CD4-positive, alpha-beta T cell (primary cell): ENCODE measurements at regions of chr17 and their contacts with region 1.

Region 1: GRCh38 chr17:14427900-14428647 is 127.2 kb downstream of the HS3ST3B1 start:
- DNase-seq: peak in 13 of 14 experiments; percentile 15 to 86 (median 47)
- ATAC-seq: peak; percentile 99
- H3K4me3 ChIP-seq: peak overlapping the region; percentile 52
- H3K4me3 Mint-ChIP-seq: peak overlapping the region; percentile 71
- H3K27ac ChIP-seq: peak overlapping the region; percentile 68 to 74
- H3K27ac Mint-ChIP-seq: peak overlapping the region; percentile 93
- H3K4me1 ChIP-seq: peaks cover 47% of the 10 kb centered on the region
- H3K4me1 Mint-ChIP-seq: peaks cover 58% of the 10 kb centered on the region
- H3K27me3 ChIP-seq: no peaks in the 10 kb centered on the region
- H3K27me3 Mint-ChIP-seq: no peaks in the 10 kb centered on the region
- CTCF ChIP-seq: no peak

Region 2: DNA sequence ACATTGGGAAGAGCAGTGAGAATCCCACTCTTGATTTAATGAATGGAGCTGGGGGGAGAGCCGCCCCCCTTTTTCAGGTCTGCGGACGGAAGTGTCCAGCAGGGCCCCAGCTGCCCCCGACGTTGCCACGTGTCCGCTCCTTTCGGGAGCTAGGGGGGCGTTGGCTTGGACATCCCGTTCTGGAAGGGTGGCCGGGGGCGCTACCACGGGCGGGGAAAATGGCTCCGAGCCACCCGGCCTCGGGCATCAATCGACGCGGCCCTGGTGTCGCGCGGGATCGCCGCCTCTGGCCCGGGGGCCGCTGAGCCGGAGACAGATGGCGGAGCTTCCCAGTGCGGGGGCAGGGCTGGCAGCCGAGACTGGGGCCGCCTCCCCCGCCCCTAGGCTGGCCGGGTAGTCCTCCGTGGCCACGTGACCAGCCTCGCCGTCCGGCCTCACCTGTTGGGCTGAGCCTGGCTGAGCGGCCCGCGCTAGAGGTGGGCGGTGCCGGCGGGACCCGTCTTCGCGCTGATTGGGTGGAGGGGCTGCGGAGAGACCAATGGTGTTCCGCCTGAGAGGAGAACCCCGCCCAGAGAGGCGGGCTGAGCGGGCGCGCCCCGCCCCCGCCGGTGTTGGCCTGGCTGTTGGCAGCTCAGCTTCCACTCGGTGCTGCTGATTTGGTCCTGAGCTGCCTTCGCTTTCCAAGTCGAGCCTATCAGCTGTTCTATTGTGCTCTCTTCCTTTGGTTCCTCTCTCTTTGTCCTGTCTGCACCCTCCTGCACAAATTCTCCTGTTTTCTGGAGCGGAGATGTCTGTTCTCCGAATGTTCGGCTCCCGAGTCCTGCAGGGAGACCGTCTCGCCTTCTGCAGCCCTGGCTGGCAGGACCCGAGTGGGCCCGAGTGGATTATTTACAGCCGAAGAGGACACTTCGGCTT is 118.9 kb before region 1 on chr17:
- CTCF ChIA-PET with region 1: no interaction called
- POLR2A ChIA-PET with region 1: interaction called, 93 read pairs
- intact Hi-C with region 1: loop called in 1 of 2 experiments (anchors 5 kb)
- DNase-seq: peak; percentile 84 to 95 (median 90)
- ATAC-seq: peak; percentile 99
- H3K4me3 ChIP-seq: peak overlapping the region; percentile 66
- H3K4me3 Mint-ChIP-seq: peak overlapping the region; percentile 90
- H3K27ac ChIP-seq: no peak overlapping the region
- H3K27ac Mint-ChIP-seq: peak overlapping the region; percentile 36
- H3K4me1 ChIP-seq: peaks cover 35% of the 10 kb centered on the region
- H3K4me1 Mint-ChIP-seq: peaks cover 76% of the 10 kb centered on the region
- H3K27me3 ChIP-seq: no peaks in the 10 kb centered on the region
- H3K27me3 Mint-ChIP-seq: no peaks in the 10 kb centered on the region
- CTCF ChIP-seq: no peak

Region 3: GRCh38 chr17:14405189-14405588 is 22.9 kb before region 1 on chr17:
- CTCF ChIA-PET with region 1: interaction called, 3 read pairs
- POLR2A ChIA-PET with region 1: interaction called, 56 read pairs
- intact Hi-C with region 1: no loop called
- DNase-seq: no peak
- ATAC-seq: no peak
- H3K4me3 ChIP-seq: no peak overlapping the region
- H3K4me3 Mint-ChIP-seq: no peak overlapping the region
- H3K27ac ChIP-seq: no peak overlapping the region
- H3K27ac Mint-ChIP-seq: peak overlapping the region; percentile 36
- H3K4me1 ChIP-seq: peaks cover 7% of the 10 kb centered on the region
- H3K4me1 Mint-ChIP-seq: peaks cover 27% of the 10 kb centered on the region
- H3K27me3 ChIP-seq: no peaks in the 10 kb centered on the region
- H3K27me3 Mint-ChIP-seq: no peaks in the 10 kb centered on the region
- CTCF ChIP-seq: no peak

Region 4: DNA sequence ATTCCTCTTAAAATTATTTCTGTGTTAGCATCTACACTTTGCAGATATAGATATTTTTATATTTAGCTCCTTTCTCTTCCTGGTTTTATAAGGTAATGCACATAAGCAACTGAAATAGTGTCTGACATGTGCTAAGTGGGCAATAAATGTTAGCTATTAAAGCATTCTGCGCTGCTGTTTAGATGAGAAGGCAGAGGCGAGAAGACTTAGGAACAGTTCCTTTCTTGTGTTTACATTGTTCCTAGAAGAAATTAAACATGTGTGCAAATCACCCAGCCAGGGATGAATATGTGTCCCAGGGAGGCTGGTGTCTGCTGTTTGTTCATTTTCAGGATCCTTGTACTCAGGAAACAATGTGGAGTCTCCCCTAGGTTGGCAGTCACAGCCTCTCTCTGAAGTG is 544.8 kb after region 1 on chr17:
- CTCF ChIA-PET with region 1: no interaction called
- POLR2A ChIA-PET with region 1: no interaction called
- intact Hi-C with region 1: no loop called
- DNase-seq: no peak
- ATAC-seq: no peak
- H3K4me3 ChIP-seq: no peak overlapping the region
- H3K4me3 Mint-ChIP-seq: no peak overlapping the region
- H3K27ac ChIP-seq: no peak overlapping the region
- H3K27ac Mint-ChIP-seq: no peak overlapping the region
- H3K4me1 ChIP-seq: no peaks in the 10 kb centered on the region
- H3K4me1 Mint-ChIP-seq: no peaks in the 10 kb centered on the region
- H3K27me3 ChIP-seq: peaks cover 12 to 13% of the 10 kb centered on the region in 2 experiments
- H3K27me3 Mint-ChIP-seq: peaks cover 17% of the 10 kb centered on the region
- CTCF ChIP-seq: no peak